ENCODE measurements at regions of chr1 and their contacts with region 1.

Region 1: GRCh38 chr1:16621300-16621658 is 7.9 kb upstream of the NBPF1 start:
- DNase-seq: no peak
- ATAC-seq: no peak
- H3K4me3 ChIP-seq: no peak overlapping the region
- H3K27ac ChIP-seq: no peak overlapping the region
- H3K4me1 ChIP-seq: peaks cover 16% of the 10 kb centered on the region
- H3K27me3 ChIP-seq: no peaks in the 10 kb centered on the region
- CTCF ChIP-seq: no peak
- POLR2A ChIP-seq: no peak

Region 2: GRCh38 chr1:16677552-16678431 is 56.5 kb after region 1 on chr1:
- intact Hi-C with region 1: no loop called
- DNase-seq: peak in 3 of 4 donors; percentile 47 to 71 (median 49)
- ATAC-seq: peak; percentile 72
- H3K4me3 ChIP-seq: no peak overlapping the region
- H3K27ac ChIP-seq: no peak overlapping the region
- H3K4me1 ChIP-seq: peaks cover 3% of the 10 kb centered on the region
- H3K27me3 ChIP-seq: no peaks in the 10 kb centered on the region
- CTCF ChIP-seq: no peak
- POLR2A ChIP-seq: no peak

Region 3: GRCh38 chr1:16946646-16947045 is 325.4 kb after region 1 on chr1:
- intact Hi-C with region 1: loop called (anchors 5 kb)
- DNase-seq: no peak
- ATAC-seq: no peak
- H3K4me3 ChIP-seq: no peak overlapping the region
- H3K27ac ChIP-seq: no peak overlapping the region
- H3K4me1 ChIP-seq: peaks cover 20% of the 10 kb centered on the region
- H3K27me3 ChIP-seq: no peaks in the 10 kb centered on the region
- CTCF ChIP-seq: no peak
- POLR2A ChIP-seq: no peak

Measured in body of pancreas (tissue), 4 donors.